Activated T-helper 2 cell treated with anti-CD3 and anti-CD28 coated beads, Interferon-gamma antibody, Interleukin-2, Interleukin-4, amounts not matched to agents 10 μg/mL and 5 μg/mL and 100 μg/mL, durations not matched to agents 14 hours and 24 hours and 36 hours (primary cell): ENCODE measurements at regions of chr1 and their contacts with region 1.

Region 1: GRCh38 chr1:45521398-45522323 is at the start of gene PRDX1:
- DNase-seq: peak; percentile 96
- H3K4me3 Mint-ChIP-seq: peak within 1 kb of the TSS; percentile 96
- H3K27ac Mint-ChIP-seq: peak within 1 kb of the TSS; percentile 95
- H3K4me1 Mint-ChIP-seq: peaks cover 37% of the 10 kb centered on the region
- H3K27me3 Mint-ChIP-seq: peaks cover 4% of the 10 kb centered on the region
- total RNA-seq, gene PRDX1: 703 and 712 TPM in 2 replicates

Region 2: GRCh38 chr1:44730741-44731512 is 790.7 kb before region 1 on chr1 and contains the start of gene RNU5D-1:
- intact Hi-C with region 1: loop called (anchors 1 kb)
- DNase-seq: peak; percentile 88
- H3K4me3 Mint-ChIP-seq: peak within 1 kb of the TSS; percentile 70
- H3K27ac Mint-ChIP-seq: peak within 1 kb of the TSS; percentile 100
- H3K4me1 Mint-ChIP-seq: peaks cover 33% of the 10 kb centered on the region
- H3K27me3 Mint-ChIP-seq: no peaks in the 10 kb centered on the region
- total RNA-seq, gene RNU5D-1: not detected in 2 replicates

Region 3: DNA sequence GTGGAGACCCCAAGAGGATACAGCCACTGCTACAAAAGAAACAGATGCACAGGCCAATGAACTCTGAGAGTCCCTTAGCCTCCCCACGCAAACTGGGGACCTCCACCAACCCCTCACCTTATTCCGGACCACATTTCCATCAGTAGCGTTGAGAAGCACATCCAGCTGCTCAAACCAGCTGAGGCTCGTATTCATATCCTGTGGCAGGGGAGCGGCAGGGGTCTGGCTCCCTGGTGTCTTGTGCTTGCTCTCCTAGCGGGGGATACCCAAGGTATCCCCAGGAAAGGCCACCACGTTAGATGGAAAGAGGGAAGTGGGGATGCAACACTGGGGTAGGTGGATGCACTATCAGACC is 22.3 kb before region 1 on chr1:
- intact Hi-C with region 1: loop called (anchors 1 kb)
- DNase-seq: no peak
- H3K4me3 Mint-ChIP-seq: peak overlapping the region; percentile 87
- H3K27ac Mint-ChIP-seq: peak overlapping the region; percentile 86
- H3K4me1 Mint-ChIP-seq: peaks cover 33% of the 10 kb centered on the region
- H3K27me3 Mint-ChIP-seq: no peaks in the 10 kb centered on the region

Region 4: GRCh38 chr1:45535988-45536766 is 14.5 kb after region 1 on chr1:
- intact Hi-C with region 1: loop called (anchors 1 kb)
- DNase-seq: no peak
- H3K4me3 Mint-ChIP-seq: no peak overlapping the region
- H3K27ac Mint-ChIP-seq: peak overlapping the region; percentile 71
- H3K4me1 Mint-ChIP-seq: peaks cover 22% of the 10 kb centered on the region
- H3K27me3 Mint-ChIP-seq: peaks cover 6% of the 10 kb centered on the region

Region 5: DNA sequence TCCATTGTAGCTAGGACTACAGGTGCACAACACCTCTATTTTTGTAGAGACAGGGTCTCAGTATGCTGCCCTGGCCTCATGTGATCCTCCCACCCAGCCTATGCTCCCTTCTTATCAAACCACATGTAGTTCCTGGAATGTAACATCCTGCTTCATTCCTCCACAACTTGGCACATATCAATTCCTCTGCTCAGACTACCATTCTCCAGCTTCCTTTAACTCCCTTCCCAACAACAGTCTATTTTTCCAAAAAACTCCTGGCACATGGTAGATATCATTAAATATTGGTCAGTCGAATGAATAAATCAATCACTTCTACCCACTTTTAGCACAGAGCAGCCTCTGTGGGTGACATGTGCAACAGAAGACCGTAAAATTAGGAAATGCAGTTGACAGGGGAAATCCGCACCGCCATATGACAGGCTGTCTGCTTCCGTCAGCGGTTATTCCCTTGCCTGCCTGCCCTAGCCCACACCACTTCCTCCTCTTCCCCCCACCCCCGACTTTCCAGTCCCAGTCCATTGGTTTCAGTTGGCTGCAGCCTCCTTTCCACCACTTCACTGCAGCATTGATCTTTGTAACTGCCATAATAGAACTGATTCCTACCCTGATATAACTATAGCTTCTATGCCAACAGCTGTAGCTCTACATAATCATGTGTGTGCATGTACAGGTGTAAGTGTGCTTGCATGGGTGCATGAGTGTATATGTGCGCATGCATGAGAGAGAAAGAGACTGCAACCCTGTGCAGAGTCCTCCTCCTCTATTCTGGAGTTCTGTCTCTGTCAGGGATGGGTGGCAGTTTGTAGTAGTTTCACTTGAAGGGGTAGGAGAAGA is 22.1 kb after region 1 on chr1:
- intact Hi-C with region 1: loop called (anchors 1 kb)
- DNase-seq: peak; percentile 63
- H3K4me3 Mint-ChIP-seq: peak overlapping the region; percentile 54
- H3K27ac Mint-ChIP-seq: peak overlapping the region; percentile 68
- H3K4me1 Mint-ChIP-seq: peaks cover 33% of the 10 kb centered on the region
- H3K27me3 Mint-ChIP-seq: peaks cover 3% of the 10 kb centered on the region

Region 6: DNA sequence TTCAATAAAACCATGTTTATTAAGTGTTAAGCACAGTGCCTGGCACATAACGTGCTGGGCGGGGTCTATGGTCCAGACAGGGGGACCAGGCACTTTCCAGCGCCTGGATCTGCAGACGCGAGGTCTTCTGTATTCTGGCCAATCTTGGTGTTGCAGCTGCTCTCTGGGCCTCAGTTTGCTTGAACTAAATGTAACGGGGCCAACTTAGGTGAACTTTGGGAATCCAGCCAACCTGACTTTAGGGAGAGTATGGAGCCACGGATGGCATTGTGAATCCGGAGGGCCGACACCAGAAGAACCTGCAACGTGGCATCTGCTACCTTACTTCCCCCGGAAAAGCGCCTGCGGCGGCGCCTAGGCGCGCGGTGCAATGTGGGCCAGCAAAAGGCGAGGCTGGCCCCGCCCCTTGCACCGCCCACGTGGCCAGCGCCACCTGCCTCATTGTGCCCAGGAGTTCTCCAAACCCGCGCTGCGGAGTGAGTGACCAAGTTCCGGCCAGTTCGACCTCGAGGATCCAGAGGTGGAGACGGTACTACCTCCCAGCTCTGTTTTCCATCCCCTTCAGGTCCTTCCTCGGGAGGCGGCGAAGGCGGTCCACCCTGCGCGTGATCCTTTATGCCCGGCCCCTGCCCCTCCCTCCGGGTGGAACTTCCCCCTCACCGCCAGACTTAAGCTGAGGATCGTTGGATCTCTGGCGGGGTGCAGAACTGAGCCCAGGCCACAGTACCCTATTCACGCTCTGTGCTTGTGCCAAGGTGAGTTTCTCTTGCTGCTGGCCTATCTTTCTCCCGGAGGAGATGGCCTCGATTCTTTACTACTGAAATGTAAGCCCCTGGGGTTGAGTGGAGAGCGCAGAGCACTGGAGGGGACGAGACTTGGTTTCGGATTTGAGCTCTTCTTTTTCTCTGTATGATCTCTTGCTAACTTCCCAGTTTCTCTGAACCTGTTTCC is 29.0 kb after region 1 on chr1 and contains the start of gene AKR1A1:
- intact Hi-C with region 1: loop called (anchors 1 kb)
- DNase-seq: peak; percentile 84
- H3K4me3 Mint-ChIP-seq: peak within 1 kb of the TSS; percentile 96
- H3K27ac Mint-ChIP-seq: peak within 1 kb of the TSS; percentile 92
- H3K4me1 Mint-ChIP-seq: peaks cover 25% of the 10 kb centered on the region
- H3K27me3 Mint-ChIP-seq: peaks cover 3% of the 10 kb centered on the region
- total RNA-seq, gene AKR1A1: 191 and 210 TPM in 2 replicates

Region 7: DNA sequence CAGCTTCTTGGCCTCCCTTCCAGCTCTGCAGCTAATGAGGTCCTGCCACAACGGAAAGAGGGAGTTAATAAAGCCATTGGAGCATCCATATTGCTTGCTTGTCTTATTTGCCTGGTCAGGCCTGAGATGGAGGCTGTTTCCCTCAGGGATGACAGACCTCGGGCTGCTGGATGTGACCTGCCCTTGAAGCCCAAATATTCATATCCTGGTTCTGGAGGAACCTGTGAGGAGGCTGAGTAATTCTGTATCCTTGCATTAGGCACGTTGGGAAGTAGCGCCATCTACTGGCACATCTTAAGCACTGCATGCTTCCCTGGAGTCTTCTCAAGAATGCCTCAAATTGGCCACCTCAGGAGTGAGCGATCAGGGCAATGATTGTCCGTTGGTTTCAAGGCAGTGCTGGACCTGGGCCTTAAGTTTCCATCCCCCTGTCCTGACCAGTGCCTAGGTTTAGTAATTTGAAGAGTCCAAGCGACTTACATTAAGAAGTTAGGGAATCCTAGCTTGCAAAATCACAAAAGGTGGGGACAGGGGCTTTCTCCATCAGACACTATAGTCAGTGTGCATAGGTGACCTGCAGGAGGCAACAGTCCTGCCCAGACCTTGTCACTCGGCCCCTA is 48.4 kb after region 1 on chr1:
- intact Hi-C with region 1: loop called (anchors 2 kb)
- DNase-seq: peak; percentile 58
- H3K4me3 Mint-ChIP-seq: no peak overlapping the region
- H3K27ac Mint-ChIP-seq: no peak overlapping the region
- H3K4me1 Mint-ChIP-seq: no peaks in the 10 kb centered on the region
- H3K27me3 Mint-ChIP-seq: no peaks in the 10 kb centered on the region